Caco-2 (cell line): ENCODE measurements at regions of chr16 and their contacts with region 1.

Region 1: DNA sequence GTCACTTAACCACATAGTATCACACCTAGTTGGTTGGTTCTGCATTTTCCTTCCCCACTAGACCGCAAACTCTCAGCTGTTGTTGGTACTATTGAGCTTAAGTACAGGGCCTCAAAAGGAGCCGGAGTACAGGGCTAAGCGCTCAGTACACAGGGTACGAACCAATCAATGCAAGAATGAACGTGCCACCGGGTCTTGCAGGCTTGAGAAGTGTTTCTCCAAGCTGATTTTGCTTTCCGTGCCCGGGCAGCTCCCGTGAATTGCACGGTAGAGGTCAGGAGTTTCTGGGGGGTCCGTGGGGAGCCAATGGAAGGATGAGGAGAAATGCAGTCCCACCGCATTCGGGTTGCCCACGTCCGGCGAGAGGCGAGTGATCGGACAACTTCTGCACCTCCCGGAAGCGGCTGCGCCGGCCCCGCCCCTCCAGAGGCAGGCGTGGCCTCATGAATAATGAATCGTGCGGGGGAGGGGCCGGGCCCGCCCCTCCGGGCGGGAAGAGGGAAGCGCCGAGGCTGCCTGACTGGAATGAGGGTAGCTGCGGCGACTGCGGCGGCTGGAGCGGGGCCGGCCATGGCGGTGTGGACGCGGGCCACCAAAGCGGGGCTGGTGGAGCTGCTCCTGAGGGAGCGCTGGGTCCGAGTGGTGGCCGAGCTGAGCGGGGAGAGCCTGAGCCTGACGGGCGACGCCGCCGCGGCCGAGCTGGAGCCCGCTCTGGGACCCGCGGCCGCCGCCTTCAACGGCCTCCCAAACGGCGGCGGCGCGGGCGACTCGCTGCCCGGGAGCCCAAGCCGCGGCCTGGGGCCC is at the start of gene SNTB2:
- DNase-seq: peak; percentile 95 to 98
- H3K4me3 ChIP-seq: peak within 1 kb of the TSS; percentile 95
- H3K4me3 Mint-ChIP-seq: peak within 1 kb of the TSS; percentile 93
- H3K27ac Mint-ChIP-seq: peak within 1 kb of the TSS; percentile 77
- H3K4me1 ChIP-seq: peaks cover 32% of the 10 kb centered on the region
- H3K4me1 Mint-ChIP-seq: peaks cover 24% of the 10 kb centered on the region
- H3K27me3 ChIP-seq: no peaks in the 10 kb centered on the region
- H3K27me3 Mint-ChIP-seq: no peaks in the 10 kb centered on the region
- CTCF ChIP-seq: no peak
- total RNA-seq, gene SNTB2: 50.6 and 51.8 TPM in 2 replicates

Region 2: GRCh38 chr16:69204172-69204571 is 17.3 kb after region 1 on chr16:
- CTCF ChIA-PET with region 1: no interaction called
- POLR2A ChIA-PET with region 1: interaction called, 13 read pairs
- intact Hi-C with region 1: no loop called
- DNase-seq: no peak
- H3K4me3 ChIP-seq: no peak overlapping the region
- H3K4me3 Mint-ChIP-seq: no peak overlapping the region
- H3K27ac Mint-ChIP-seq: no peak overlapping the region
- H3K4me1 ChIP-seq: peaks cover 14% of the 10 kb centered on the region
- H3K4me1 Mint-ChIP-seq: peaks cover 25% of the 10 kb centered on the region
- H3K27me3 ChIP-seq: no peaks in the 10 kb centered on the region
- H3K27me3 Mint-ChIP-seq: no peaks in the 10 kb centered on the region
- CTCF ChIP-seq: no peak

Region 3: DNA sequence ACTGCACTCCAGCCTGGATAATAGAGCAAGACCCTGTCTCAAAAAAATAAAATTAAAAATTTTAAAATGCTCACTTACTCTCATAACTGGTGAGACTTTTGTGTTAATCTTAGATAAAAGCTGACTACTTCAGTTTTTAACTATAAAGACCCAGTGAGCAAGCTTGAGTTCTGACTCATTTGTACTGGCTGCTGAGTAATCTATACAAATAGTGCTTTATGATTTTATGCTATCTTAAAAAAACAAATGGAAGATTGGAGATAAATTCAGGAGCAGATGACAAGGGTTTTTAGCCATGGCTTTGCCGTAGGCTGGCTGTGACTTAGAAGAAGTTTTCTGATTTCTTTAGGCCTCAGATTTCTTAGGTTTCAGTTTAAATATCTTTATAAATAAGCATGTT is 30.6 kb after region 1 on chr16:
- CTCF ChIA-PET with region 1: no interaction called
- POLR2A ChIA-PET with region 1: interaction called, 5 read pairs
- intact Hi-C with region 1: loop called (anchors 2 kb)
- DNase-seq: peak in 1 of 2 experiments; percentile 40
- H3K4me3 ChIP-seq: no peak overlapping the region
- H3K4me3 Mint-ChIP-seq: peak overlapping the region; percentile 44
- H3K27ac Mint-ChIP-seq: peak overlapping the region; percentile 72
- H3K4me1 ChIP-seq: peaks cover 55% of the 10 kb centered on the region
- H3K4me1 Mint-ChIP-seq: peaks cover 19% of the 10 kb centered on the region
- H3K27me3 ChIP-seq: no peaks in the 10 kb centered on the region
- H3K27me3 Mint-ChIP-seq: no peaks in the 10 kb centered on the region
- CTCF ChIP-seq: no peak

Region 4: DNA sequence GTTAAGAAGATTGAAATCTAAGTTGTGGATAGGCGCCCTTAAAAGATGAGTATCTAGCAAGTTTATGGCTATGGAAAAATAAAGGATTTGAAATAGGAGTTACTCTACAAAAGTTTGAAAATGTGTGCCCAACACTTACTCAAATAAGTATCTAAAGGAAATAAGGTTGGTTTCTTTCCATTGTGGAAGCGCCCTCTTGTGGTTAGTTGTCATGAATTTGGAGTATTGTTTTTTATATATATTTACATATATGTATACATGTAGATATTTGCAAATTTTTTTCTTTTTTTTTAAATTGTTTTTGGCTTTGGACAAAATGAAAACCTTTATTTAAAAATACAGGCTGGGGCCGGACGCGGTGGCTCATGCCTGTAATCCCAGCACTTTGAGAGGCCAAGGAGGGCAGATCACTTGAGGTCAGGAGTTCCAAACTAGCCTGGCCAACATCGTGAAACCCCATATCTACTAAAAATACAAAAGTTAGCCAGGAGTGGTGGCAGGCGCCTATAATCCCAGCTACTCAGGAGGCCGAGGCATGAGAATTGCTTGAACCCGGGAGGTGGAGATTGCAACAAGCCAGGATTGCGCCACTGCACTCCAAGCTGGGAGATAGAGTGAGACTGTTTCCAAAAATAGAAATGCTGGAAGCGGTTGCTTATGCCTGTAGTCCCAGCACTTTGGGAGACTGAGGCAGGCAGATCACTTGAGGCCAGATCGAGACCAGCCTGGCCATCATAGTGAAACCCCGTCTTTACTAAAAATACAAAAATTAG is 100.3 kb after region 1 on chr16:
- CTCF ChIA-PET with region 1: no interaction called
- POLR2A ChIA-PET with region 1: interaction called, 3 read pairs
- intact Hi-C with region 1: loop called (anchors 10 kb)
- DNase-seq: peak in 1 of 2 experiments; percentile 70
- H3K4me3 ChIP-seq: no peak overlapping the region
- H3K4me3 Mint-ChIP-seq: no peak overlapping the region
- H3K27ac Mint-ChIP-seq: no peak overlapping the region
- H3K4me1 ChIP-seq: peaks cover 29% of the 10 kb centered on the region
- H3K4me1 Mint-ChIP-seq: peaks cover 6% of the 10 kb centered on the region
- H3K27me3 ChIP-seq: no peaks in the 10 kb centered on the region
- H3K27me3 Mint-ChIP-seq: no peaks in the 10 kb centered on the region
- CTCF ChIP-seq: peak; percentile 68 to 73

Region 5: GRCh38 chr16:69294051-69294450 is 107.2 kb after region 1 on chr16:
- CTCF ChIA-PET with region 1: no interaction called
- POLR2A ChIA-PET with region 1: interaction called, 16 read pairs
- intact Hi-C with region 1: loop called (anchors 10 kb)
- DNase-seq: no peak
- H3K4me3 ChIP-seq: no peak overlapping the region
- H3K4me3 Mint-ChIP-seq: no peak overlapping the region
- H3K27ac Mint-ChIP-seq: no peak overlapping the region
- H3K4me1 ChIP-seq: no peaks in the 10 kb centered on the region
- H3K4me1 Mint-ChIP-seq: peaks cover 7% of the 10 kb centered on the region
- H3K27me3 ChIP-seq: no peaks in the 10 kb centered on the region
- H3K27me3 Mint-ChIP-seq: no peaks in the 10 kb centered on the region
- CTCF ChIP-seq: no peak

Region 6: GRCh38 chr16:69310653-69311532 is 124.0 kb after region 1 on chr16 and contains the start of gene VPS4A:
- CTCF ChIA-PET with region 1: no interaction called
- POLR2A ChIA-PET with region 1: no interaction called
- intact Hi-C with region 1: loop called (anchors 1 kb)
- DNase-seq: peak; percentile 97 to 100
- H3K4me3 ChIP-seq: peak within 1 kb of the TSS; percentile 96
- H3K4me3 Mint-ChIP-seq: peak within 1 kb of the TSS; percentile 81
- H3K27ac Mint-ChIP-seq: peak within 1 kb of the TSS; percentile 65
- H3K4me1 ChIP-seq: peaks cover 9% of the 10 kb centered on the region; the same call in 1 of the 2 replicates
- H3K4me1 Mint-ChIP-seq: peaks cover 5% of the 10 kb centered on the region
- H3K27me3 ChIP-seq: no peaks in the 10 kb centered on the region
- H3K27me3 Mint-ChIP-seq: no peaks in the 10 kb centered on the region
- CTCF ChIP-seq: peak; percentile 91 to 98
- total RNA-seq, gene VPS4A: 42.4 and 45.8 TPM in 2 replicates